MCF 10A (cell line): ENCODE measurements at regions of chr12 and their contacts with region 1.

Region 1: DNA sequence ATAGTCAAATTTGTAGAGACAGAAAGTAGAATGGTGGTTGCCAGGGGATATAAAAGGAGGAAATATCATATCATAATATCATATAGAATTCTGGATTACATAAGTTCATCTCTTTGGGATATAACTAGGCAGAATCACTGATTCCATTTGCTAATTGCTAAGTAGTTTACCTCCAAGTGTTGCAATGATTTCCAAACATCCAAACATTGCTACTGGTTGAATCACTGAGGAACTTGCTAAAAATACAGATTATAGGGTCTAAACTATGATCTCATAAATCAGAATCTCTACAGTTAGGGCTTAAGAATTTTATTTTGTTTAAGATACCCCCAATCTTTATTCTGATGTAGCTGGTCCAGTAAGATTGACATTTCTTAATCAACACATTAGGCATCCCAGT is 16.1 kb upstream of the TAS2R42 start:
- DNase-seq: no peak
- H3K4me3 Mint-ChIP-seq: no peak overlapping the region
- H3K27ac Mint-ChIP-seq: no peak overlapping the region
- H3K4me1 Mint-ChIP-seq: peaks cover 6% of the 10 kb centered on the region
- H3K27me3 Mint-ChIP-seq: peaks cover 11% of the 10 kb centered on the region
- CTCF ChIP-seq: no peak

Region 2: DNA sequence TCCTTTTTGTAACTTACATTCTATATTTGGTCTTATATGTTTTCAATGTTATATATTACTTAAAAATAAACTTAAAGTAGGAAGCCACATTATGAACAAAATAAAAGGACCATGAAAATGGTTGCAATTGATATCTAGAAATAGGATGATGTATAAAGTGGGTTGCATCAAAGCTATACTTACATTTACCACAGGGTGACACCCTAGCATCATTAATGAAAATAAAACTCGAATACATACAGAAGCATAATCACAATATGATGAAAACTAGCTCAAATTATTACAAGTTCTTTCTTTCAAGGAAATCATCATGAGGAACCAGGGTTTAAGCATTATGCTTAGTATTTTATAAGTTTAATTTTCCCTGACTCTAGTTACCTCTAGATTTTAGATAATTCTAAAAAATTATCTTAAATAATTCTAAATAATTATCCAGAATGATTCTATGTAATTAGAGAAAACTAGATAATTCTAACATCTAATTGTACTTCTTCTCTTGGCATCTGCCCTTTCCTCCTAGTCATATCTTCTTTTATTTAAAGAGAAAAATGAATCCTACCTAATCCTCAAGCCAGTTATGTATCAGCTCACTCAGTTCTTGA is 431.6 kb before region 1 on chr12:
- CTCF ChIA-PET with region 1: interaction called, 138 read pairs
- POLR2A ChIA-PET with region 1: no interaction called
- intact Hi-C with region 1: loop called (anchors 1 kb)
- DNase-seq: peak; percentile 56
- H3K4me3 Mint-ChIP-seq: no peak overlapping the region
- H3K27ac Mint-ChIP-seq: no peak overlapping the region
- H3K4me1 Mint-ChIP-seq: no peaks in the 10 kb centered on the region
- H3K27me3 Mint-ChIP-seq: peaks cover 94% of the 10 kb centered on the region
- CTCF ChIP-seq: peak; percentile 68

Region 3: GRCh38 chr12:10867381-10867780 is 335.4 kb before region 1 on chr12:
- CTCF ChIA-PET with region 1: interaction called, 4 read pairs
- POLR2A ChIA-PET with region 1: no interaction called
- intact Hi-C with region 1: loop called (anchors 2 kb)
- DNase-seq: no peak
- H3K4me3 Mint-ChIP-seq: no peak overlapping the region
- H3K27ac Mint-ChIP-seq: no peak overlapping the region
- H3K4me1 Mint-ChIP-seq: no peaks in the 10 kb centered on the region
- H3K27me3 Mint-ChIP-seq: no peaks in the 10 kb centered on the region
- CTCF ChIP-seq: no peak

Region 4: GRCh38 chr12:11144297-11144696 is 58.5 kb before region 1 on chr12:
- CTCF ChIA-PET with region 1: no interaction called
- POLR2A ChIA-PET with region 1: no interaction called
- intact Hi-C with region 1: no loop called
- DNase-seq: no peak
- H3K4me3 Mint-ChIP-seq: no peak overlapping the region
- H3K27ac Mint-ChIP-seq: no peak overlapping the region
- H3K4me1 Mint-ChIP-seq: no peaks in the 10 kb centered on the region
- H3K27me3 Mint-ChIP-seq: no peaks in the 10 kb centered on the region
- CTCF ChIP-seq: no peak

Region 5: DNA sequence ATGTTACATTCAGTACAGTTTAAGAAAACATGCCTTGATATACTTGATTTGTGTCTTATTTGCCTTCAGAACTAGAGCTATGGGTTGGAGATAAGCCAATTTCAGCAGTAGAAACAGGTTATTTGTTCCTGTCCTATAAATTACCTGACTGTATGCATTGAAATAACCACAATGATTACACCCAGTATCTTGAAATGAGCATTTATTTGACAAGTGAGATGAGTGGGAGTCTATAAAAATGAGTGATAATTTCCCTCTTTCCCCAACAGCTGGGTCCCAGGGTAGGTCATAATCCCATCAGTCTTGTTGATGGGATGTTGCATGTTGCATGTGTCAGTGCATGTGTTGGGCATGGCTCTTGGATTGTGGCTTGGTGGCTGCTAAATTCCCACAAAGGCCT is 19.8 kb before region 1 on chr12:
- CTCF ChIA-PET with region 1: interaction called, 14 read pairs
- POLR2A ChIA-PET with region 1: no interaction called
- intact Hi-C with region 1: no loop called
- DNase-seq: no peak
- H3K4me3 Mint-ChIP-seq: no peak overlapping the region
- H3K27ac Mint-ChIP-seq: no peak overlapping the region
- H3K4me1 Mint-ChIP-seq: peaks cover 13% of the 10 kb centered on the region
- H3K27me3 Mint-ChIP-seq: peaks cover 4% of the 10 kb centered on the region
- CTCF ChIP-seq: no peak

Region 6: DNA sequence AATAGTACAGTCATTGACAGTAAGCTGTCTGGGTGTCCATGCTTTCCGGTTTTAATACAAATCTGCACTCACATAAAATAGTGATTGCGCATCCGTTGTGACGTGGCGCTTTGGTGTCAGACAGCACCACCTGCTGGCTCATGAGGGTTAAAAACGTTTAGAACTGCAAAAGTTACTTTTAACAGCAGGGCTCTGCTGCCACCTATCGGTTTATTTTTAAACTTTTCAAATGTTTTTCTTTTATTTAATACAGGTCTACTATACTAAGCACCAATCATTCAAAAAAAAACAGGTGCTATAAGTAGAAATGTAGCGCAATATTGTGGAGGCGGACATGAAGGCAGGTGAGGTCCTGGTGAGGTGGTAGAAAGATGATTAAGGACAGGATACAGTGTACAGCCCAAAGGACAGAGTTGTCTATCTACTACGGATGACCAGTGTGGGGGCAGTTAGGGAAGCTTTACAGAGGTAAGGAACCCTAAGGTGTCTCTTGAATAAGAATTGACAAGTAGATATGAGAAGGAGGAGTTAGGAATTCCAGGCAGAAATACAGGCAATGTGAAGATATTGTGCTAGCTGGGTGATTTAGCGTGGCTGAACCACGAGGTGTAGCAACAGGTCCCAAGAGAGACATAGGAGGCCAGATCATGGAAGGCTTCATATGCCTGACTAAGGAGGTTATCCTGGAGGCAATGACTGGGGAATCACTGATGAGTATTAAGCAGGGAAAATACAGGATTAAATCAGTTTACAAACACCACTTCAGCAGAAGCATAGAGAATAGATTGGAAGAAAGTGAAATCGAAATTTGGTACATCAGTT is 284.0 kb after region 1 on chr12:
- CTCF ChIA-PET with region 1: interaction called, 36 read pairs
- POLR2A ChIA-PET with region 1: no interaction called
- intact Hi-C with region 1: loop called (anchors 1 kb)
- DNase-seq: peak; percentile 88
- H3K4me3 Mint-ChIP-seq: no peak overlapping the region
- H3K27ac Mint-ChIP-seq: no peak overlapping the region
- H3K4me1 Mint-ChIP-seq: peaks cover 9% of the 10 kb centered on the region
- H3K27me3 Mint-ChIP-seq: peaks cover 47% of the 10 kb centered on the region
- CTCF ChIP-seq: peak; percentile 97